ENCODE measurements at regions of chr6 and their contacts with region 1.

Region 1: GRCh38 chr6:34154668-34155447 is 9.0 kb upstream of the GRM4 start:
- DNase-seq: peak in 1 of 2 experiments; percentile 99
- H3K4me3 ChIP-seq: peak overlapping the region; percentile 3 to 72 (median 48)
- H3K27ac ChIP-seq: no peak overlapping the region
- H3K4me1 ChIP-seq: peaks cover 3 to 30% (median 10%) of the 10 kb centered on the region in 4 experiments
- H3K27me3 ChIP-seq: peaks cover 8 to 41% (median 26%) of the 10 kb centered on the region in 4 experiments
- CTCF ChIP-seq: peak in 2 of 3 experiments; percentile 93 to 98; a peak in 3 of 4 replicates
- EP300 ChIP-seq: no peak
- POLR2A ChIP-seq: no peak
- RAD21 ChIP-seq: peak; percentile 98 to 99

Region 2: DNA sequence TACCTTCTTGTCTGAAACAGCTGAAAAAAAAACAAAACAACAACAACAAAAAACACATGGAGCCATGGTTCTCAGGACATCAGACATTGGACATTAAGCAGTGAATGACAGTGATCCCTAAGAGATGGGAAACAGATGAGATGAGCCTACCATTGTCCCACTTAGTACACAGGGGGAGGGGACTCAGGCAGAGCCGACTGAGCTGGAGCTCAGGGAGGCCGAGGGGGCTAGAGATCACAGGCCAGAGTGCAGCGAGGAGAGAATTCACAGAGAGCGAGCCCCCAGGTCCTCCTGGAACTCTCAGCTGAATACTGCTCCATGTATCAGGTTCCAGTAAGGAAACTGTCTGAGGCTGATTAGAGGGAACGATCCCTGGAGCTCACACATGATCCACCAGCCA is 143.6 kb before region 1 on chr6:
- CTCF ChIA-PET with region 1: no interaction called
- POLR2A ChIA-PET with region 1: no interaction called
- DNase-seq: no peak
- H3K4me3 ChIP-seq: no peak overlapping the region
- H3K27ac ChIP-seq: no peak overlapping the region
- H3K4me1 ChIP-seq: peaks cover 0 to 4% (median 2%) of the 10 kb centered on the region in 4 experiments; a peak in 5 of 7 replicates
- H3K27me3 ChIP-seq: peaks cover 29 to 77% (median 71%) of the 10 kb centered on the region in 4 experiments
- CTCF ChIP-seq: no peak
- EP300 ChIP-seq: no peak
- POLR2A ChIP-seq: no peak
- RAD21 ChIP-seq: no peak

Region 3: DNA sequence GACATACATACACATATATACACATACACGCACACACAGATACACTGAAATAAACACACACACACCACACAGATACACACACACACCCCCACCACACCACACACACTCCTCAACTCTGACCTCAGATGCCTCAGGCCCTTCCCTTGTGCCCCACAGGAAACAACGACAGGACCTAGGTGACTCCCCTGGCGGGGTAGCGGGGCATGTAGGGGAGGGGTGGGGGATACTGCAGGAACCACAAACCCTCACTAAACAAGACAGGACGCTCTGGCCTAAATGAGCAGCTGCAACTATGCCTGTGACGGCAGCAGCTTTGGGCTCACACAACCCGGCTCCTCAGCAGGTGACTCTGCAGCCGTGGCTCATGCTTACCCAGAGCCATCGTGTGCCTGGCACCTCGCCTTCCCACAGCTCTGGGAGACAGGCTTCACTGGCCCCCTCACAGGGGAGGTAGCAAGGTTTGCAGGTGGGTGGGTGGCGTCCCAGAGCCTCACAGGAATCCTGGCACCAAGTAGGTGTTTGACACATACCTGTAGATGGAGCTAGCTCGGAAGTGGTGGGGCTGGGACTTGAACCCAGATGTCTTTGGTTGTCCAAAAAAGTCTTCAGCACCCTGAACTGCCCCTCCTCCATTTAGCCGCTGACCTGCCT is 109.8 kb before region 1 on chr6:
- CTCF ChIA-PET with region 1: interaction called, 14 read pairs
- POLR2A ChIA-PET with region 1: no interaction called
- DNase-seq: no peak
- H3K4me3 ChIP-seq: no peak overlapping the region
- H3K27ac ChIP-seq: no peak overlapping the region
- H3K4me1 ChIP-seq: peaks cover 0 to 13% (median 8%) of the 10 kb centered on the region in 4 experiments; a peak in 6 of 7 replicates
- H3K27me3 ChIP-seq: no peaks in the 10 kb centered on the region
- CTCF ChIP-seq: no peak
- EP300 ChIP-seq: no peak
- POLR2A ChIP-seq: no peak
- RAD21 ChIP-seq: no peak

Region 4: GRCh38 chr6:34067814-34068213 is 87.0 kb before region 1 on chr6:
- CTCF ChIA-PET with region 1: interaction called, 47 read pairs
- POLR2A ChIA-PET with region 1: no interaction called
- DNase-seq: no peak
- H3K4me3 ChIP-seq: no peak overlapping the region
- H3K27ac ChIP-seq: no peak overlapping the region
- H3K4me1 ChIP-seq: peaks cover 0 to 14% (median 7%) of the 10 kb centered on the region in 4 experiments; a peak in 6 of 7 replicates
- H3K27me3 ChIP-seq: no peaks in the 10 kb centered on the region
- CTCF ChIP-seq: peak in 2 of 3 experiments; percentile 48 to 50; a peak in 3 of 4 replicates
- EP300 ChIP-seq: no peak
- POLR2A ChIP-seq: no peak
- RAD21 ChIP-seq: peak; percentile 31 to 56

Region 5: GRCh38 chr6:34074064-34074742 is 80.7 kb before region 1 on chr6:
- CTCF ChIA-PET with region 1: interaction called, 36 read pairs
- POLR2A ChIA-PET with region 1: no interaction called
- DNase-seq: no peak
- H3K4me3 ChIP-seq: no peak overlapping the region
- H3K27ac ChIP-seq: no peak overlapping the region
- H3K4me1 ChIP-seq: peaks cover 0 to 18% (median 2%) of the 10 kb centered on the region in 4 experiments; a peak in 5 of 7 replicates
- H3K27me3 ChIP-seq: no peaks in the 10 kb centered on the region; a peak in 1 of 7 replicates
- CTCF ChIP-seq: peak in 2 of 3 experiments; percentile 61 to 82; a peak in 3 of 4 replicates
- EP300 ChIP-seq: no peak
- POLR2A ChIP-seq: no peak
- RAD21 ChIP-seq: peak; percentile 53 to 66

Region 6: GRCh38 chr6:34115403-34115795 is 39.5 kb before region 1 on chr6:
- CTCF ChIA-PET with region 1: interaction called, 26 read pairs
- POLR2A ChIA-PET with region 1: no interaction called
- DNase-seq: peak in 1 of 2 experiments; percentile 85
- H3K4me3 ChIP-seq: no peak overlapping the region
- H3K27ac ChIP-seq: no peak overlapping the region
- H3K4me1 ChIP-seq: peaks cover 0 to 1% (median 0%) of the 10 kb centered on the region in 4 experiments; a peak in 1 of 7 replicates
- H3K27me3 ChIP-seq: no peaks in the 10 kb centered on the region
- CTCF ChIP-seq: no peak
- EP300 ChIP-seq: no peak
- POLR2A ChIP-seq: no peak
- RAD21 ChIP-seq: peak in 1 of 2 experiments; percentile 14; a peak in 1 of 4 replicates

Region 7: GRCh38 chr6:34126419-34126818 is 28.4 kb before region 1 on chr6:
- CTCF ChIA-PET with region 1: interaction called, 128 read pairs
- POLR2A ChIA-PET with region 1: interaction called, 6 read pairs
- DNase-seq: no peak
- H3K4me3 ChIP-seq: no peak overlapping the region
- H3K27ac ChIP-seq: no peak overlapping the region
- H3K4me1 ChIP-seq: peaks cover 18 to 22% (median 21%) of the 10 kb centered on the region in 4 experiments
- H3K27me3 ChIP-seq: no peaks in the 10 kb centered on the region
- CTCF ChIP-seq: peak in 2 of 3 experiments; percentile 14 to 42; a peak in 2 of 4 replicates
- EP300 ChIP-seq: no peak
- POLR2A ChIP-seq: no peak
- RAD21 ChIP-seq: peak in 1 of 2 experiments; percentile 3; a peak in 1 of 4 replicates

Region 8: DNA sequence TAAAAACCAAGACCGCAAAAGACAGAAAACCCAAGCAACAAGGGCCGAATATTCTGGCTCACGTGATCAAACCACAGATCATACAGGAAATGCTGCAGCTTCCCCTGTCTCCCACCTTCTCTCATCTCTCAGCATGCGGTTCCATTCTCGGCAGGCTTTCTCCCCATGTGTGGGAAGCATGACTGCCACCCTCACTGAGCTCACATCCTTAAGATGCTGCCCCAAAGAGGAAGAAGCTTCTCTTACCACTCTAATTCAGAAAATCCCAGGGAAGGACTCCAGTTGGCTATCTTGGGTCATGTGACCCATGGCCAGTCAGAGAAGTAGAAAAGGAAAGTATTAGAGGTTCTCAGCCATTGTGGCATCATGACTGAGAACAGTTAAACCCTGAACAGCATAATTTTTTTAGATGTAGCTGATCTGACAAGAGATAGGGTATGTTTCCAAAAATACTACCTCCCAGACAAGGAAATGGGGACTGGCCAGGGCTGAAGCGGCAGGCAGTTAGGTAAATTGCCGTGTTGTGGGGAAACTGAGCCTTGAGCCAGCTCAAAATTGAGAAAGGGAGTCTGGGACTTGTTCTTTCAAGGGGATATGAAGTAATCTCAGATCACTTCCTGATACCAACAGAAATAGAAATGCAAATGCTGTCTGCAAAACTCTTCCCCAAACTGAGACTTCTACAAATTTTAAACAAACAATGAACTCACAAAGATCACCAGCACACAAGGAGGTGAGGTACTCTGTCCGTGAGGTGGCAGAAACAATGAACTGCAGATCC is 28.1 kb after region 1 on chr6:
- CTCF ChIA-PET with region 1: interaction called, 12 read pairs
- POLR2A ChIA-PET with region 1: no interaction called
- DNase-seq: no peak
- H3K4me3 ChIP-seq: no peak overlapping the region
- H3K27ac ChIP-seq: no peak overlapping the region
- H3K4me1 ChIP-seq: no peaks in the 10 kb centered on the region
- H3K27me3 ChIP-seq: no peaks in the 10 kb centered on the region
- CTCF ChIP-seq: no peak
- EP300 ChIP-seq: no peak
- POLR2A ChIP-seq: no peak
- RAD21 ChIP-seq: no peak

Region 9: GRCh38 chr6:34341481-34341971 is 186.7 kb after region 1 on chr6:
- CTCF ChIA-PET with region 1: no interaction called
- POLR2A ChIA-PET with region 1: no interaction called
- DNase-seq: no peak
- H3K4me3 ChIP-seq: no peak overlapping the region
- H3K27ac ChIP-seq: no peak overlapping the region
- H3K4me1 ChIP-seq: no peaks in the 10 kb centered on the region
- H3K27me3 ChIP-seq: no peaks in the 10 kb centered on the region
- CTCF ChIP-seq: no peak
- EP300 ChIP-seq: no peak
- POLR2A ChIP-seq: no peak
- RAD21 ChIP-seq: no peak

Measured in H1 (cell line).